Caco-2 (cell line): ENCODE measurements at regions of chr7 and their contacts with region 1.

Region 1: GRCh38 chr7:21782996-21783395 is 162.7 kb downstream of the CDCA7L start:
- DNase-seq: no peak
- H3K4me3 ChIP-seq: no peak overlapping the region
- H3K4me3 Mint-ChIP-seq: no peak overlapping the region
- H3K27ac Mint-ChIP-seq: no peak overlapping the region
- H3K4me1 ChIP-seq: no peaks in the 10 kb centered on the region
- H3K4me1 Mint-ChIP-seq: no peaks in the 10 kb centered on the region
- H3K27me3 ChIP-seq: no peaks in the 10 kb centered on the region
- H3K27me3 Mint-ChIP-seq: no peaks in the 10 kb centered on the region
- CTCF ChIP-seq: no peak

Region 2: DNA sequence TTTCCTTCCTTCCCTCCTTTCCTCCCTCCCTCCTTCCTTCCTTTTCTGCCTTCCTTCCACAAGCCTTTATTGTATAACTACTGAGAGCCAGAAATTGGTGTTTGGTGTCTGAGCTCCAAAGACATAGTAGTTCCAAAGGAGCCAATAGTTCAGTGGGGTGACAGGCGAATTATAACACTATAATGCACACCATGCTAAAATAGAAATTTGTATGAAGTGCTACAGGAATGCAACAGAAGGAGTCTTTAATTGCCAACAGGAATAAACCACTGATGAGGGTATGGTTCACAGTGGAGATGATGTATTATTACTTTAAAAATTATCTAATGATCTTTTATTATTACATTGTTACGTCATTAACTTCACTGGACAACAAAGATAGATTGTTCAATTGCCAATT is 837.5 kb before region 1 on chr7:
- CTCF ChIA-PET with region 1: no interaction called
- POLR2A ChIA-PET with region 1: no interaction called
- intact Hi-C with region 1: no loop called
- DNase-seq: no peak
- H3K4me3 ChIP-seq: no peak overlapping the region
- H3K4me3 Mint-ChIP-seq: no peak overlapping the region
- H3K27ac Mint-ChIP-seq: no peak overlapping the region
- H3K4me1 ChIP-seq: no peaks in the 10 kb centered on the region
- H3K4me1 Mint-ChIP-seq: no peaks in the 10 kb centered on the region
- H3K27me3 ChIP-seq: no peaks in the 10 kb centered on the region
- H3K27me3 Mint-ChIP-seq: peaks cover 3% of the 10 kb centered on the region
- CTCF ChIP-seq: no peak

Region 3: GRCh38 chr7:21945454-21946227 is 162.6 kb after region 1 on chr7 and contains the start of gene CDCA7L:
- CTCF ChIA-PET with region 1: no interaction called
- POLR2A ChIA-PET with region 1: no interaction called
- intact Hi-C with region 1: no loop called
- DNase-seq: peak; percentile 66 to 75
- H3K4me3 ChIP-seq: peak within 1 kb of the TSS; percentile 64
- H3K4me3 Mint-ChIP-seq: peak within 1 kb of the TSS; percentile 73
- H3K27ac Mint-ChIP-seq: peak within 1 kb of the TSS; percentile 86
- H3K4me1 ChIP-seq: 0 out of 2 replicates have a peak, but pooled peaks cover 8% of the 10 kb centered on the region
- H3K4me1 Mint-ChIP-seq: peaks cover 12% of the 10 kb centered on the region
- H3K27me3 ChIP-seq: peaks cover 2% of the 10 kb centered on the region; the same call in 1 of the 2 replicates
- H3K27me3 Mint-ChIP-seq: peaks cover 7% of the 10 kb centered on the region
- CTCF ChIP-seq: peak in 1 of 2 experiments; percentile 9
- total RNA-seq, gene CDCA7L: 15.2 and 19.1 TPM in 2 replicates

Region 4: DNA sequence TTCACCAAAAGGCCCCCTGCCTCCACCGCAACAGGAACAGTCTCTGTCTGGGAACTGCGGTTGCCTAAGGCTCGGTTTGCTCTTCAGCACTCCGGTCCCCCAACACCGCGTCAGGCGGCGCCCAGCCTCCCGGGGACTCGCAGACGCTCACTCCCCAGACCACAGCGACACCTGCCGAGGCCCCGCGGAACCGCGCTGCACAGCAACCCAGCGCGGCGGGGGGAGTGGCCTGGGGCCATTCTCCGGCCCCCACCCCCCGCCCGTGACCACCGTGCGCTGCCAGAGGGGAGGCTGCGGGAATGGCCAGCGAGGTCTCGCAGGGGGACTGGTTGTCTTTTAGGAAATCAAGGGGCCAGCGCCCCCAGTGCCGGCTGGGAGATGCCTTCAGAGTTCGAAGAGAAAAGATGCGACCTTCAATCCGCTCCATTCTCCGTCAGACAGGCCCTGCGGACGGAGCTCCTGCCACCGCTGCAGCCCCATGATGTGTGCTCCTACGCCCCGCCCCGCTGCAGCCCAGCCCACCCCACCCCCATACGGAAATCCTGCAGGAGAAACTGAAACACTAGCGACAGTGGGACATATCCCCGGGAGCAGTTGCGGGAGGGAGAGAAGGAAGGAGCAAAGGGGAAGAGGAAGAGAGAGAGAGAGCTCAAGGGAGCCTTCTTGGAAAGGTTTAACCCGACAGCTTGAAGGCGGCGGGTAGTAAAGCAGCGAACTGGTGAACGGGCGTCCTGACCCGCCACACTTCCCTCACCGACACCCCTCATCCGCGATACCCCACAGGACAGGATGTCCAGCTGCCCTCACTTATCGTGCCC is 300.1 kb after region 1 on chr7:
- CTCF ChIA-PET with region 1: no interaction called
- POLR2A ChIA-PET with region 1: no interaction called
- intact Hi-C with region 1: loop called (anchors 5 kb)
- DNase-seq: peak; percentile 85 to 96
- H3K4me3 ChIP-seq: peak overlapping the region; percentile 56
- H3K4me3 Mint-ChIP-seq: peak overlapping the region; percentile 81
- H3K27ac Mint-ChIP-seq: peak overlapping the region; percentile 40
- H3K4me1 ChIP-seq: no peaks in the 10 kb centered on the region
- H3K4me1 Mint-ChIP-seq: peaks cover 6% of the 10 kb centered on the region
- H3K27me3 ChIP-seq: no peaks in the 10 kb centered on the region
- H3K27me3 Mint-ChIP-seq: peaks cover 7% of the 10 kb centered on the region
- CTCF ChIP-seq: peak; percentile 94 to 95